ENCODE measurements at regions of chr9 and their contacts with region 1.

Region 1: DNA sequence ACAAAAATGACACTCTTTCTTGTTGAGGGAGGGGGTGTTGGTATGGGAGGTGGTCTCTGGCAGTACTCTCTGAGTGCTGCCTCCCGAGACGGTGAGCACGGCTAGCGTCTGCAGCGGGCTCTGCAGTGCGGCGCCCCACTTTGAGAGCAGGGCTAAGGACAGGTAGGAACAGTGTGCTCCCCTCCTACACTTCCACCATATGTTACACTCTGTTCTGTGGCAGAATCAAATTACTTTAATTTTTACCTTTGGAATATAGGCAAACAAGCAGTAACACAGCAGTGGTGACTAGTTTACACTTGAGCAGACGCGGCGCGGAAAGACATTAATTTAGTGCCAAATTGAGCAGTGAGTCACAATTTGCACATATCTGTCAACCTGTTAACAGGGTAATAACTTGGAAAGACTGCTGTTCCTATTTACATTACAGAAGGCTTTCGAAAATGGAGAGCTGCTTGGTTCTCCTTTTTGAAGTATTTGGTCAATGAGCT is 136.3 kb downstream of the MED27 start:
- DNase-seq: no peak
- ATAC-seq: no peak
- H3K4me3 ChIP-seq: no peak overlapping the region
- H3K27ac ChIP-seq: no peak overlapping the region
- H3K4me1 ChIP-seq: no peaks in the 10 kb centered on the region
- CTCF ChIP-seq: no peak
- EP300 ChIP-seq: no peak
- POLR2A ChIP-seq: no peak
- RAD21 ChIP-seq: no peak

Region 2: GRCh38 chr9:131954299-131954698 is 10.9 kb after region 1 on chr9:
- CTCF ChIA-PET with region 1: interaction called, 11 read pairs
- POLR2A ChIA-PET with region 1: no interaction called
- DNase-seq: peak in 1 of 2 experiments; percentile 15
- ATAC-seq: peak; percentile 56 to 70; a peak in 3 of 6 replicates
- H3K4me3 ChIP-seq: no peak overlapping the region
- H3K27ac ChIP-seq: no peak overlapping the region
- H3K4me1 ChIP-seq: no peaks in the 10 kb centered on the region
- CTCF ChIP-seq: peak; percentile 36
- EP300 ChIP-seq: no peak
- POLR2A ChIP-seq: no peak
- RAD21 ChIP-seq: peak; percentile 20 to 23; a peak in 3 of 5 replicates